CD14-positive monocyte (primary cell): ENCODE measurements at regions of chr14 and their contacts with region 1.

Region 1: DNA sequence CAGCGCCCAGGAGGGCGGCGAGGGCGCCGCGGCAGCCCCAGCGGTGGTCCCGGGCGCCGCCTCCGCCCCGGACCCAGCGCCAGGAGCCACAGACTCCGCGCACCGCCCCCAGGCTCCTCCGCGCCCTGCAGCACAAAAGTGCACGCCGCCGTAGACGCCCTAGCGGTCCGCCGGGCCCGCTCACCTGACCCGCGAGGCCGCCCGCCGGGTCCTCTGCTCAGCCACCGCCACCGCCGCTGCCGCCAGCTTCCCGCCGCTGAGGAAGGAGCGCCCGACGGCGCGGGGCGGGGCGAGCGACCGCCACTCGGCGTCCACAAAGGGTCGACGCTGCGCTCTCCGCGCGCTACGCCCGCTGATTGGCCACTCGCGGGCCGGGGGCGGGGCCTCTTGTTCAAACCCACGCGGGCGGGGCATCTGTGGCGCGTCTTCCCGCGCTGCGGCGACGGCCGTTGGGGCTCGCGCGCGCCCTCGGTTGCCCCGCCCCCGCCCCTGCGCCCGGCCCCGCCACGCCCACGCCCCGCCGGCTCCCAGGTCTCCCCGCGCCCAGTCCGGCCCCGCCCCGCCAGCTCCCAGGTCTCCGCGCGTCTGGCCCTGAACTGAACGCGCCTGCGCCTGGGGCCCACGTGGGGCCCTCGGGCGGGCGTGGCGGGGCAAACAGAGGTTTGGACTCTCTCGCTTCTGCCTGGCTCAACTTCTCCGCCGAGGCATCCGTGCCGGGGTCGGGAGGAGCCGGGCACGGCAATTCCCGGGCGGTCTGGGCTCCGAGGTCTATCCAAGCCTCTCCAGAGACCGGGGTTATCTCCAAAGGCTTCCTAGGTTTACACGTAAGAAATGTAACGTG is at the start of gene CDCA4:
- DNase-seq: peak; percentile 96 to 97 (median 96)
- H3K4me3 ChIP-seq: peak within 1 kb of the TSS; percentile 51 to 81 (median 54)
- H3K4me3 Mint-ChIP-seq: peak within 1 kb of the TSS; percentile 89 to 91
- H3K27ac ChIP-seq: peak within 1 kb of the TSS; percentile 92 to 95
- H3K27ac Mint-ChIP-seq: peak within 1 kb of the TSS; percentile 92 to 99 (median 97)
- H3K4me1 ChIP-seq: peaks cover 51 to 74% of the 10 kb centered on the region in 2 donors
- H3K4me1 Mint-ChIP-seq: peaks cover 78% of the 10 kb centered on the region
- H3K27me3 ChIP-seq: no peaks in the 10 kb centered on the region
- H3K27me3 Mint-ChIP-seq: peaks cover 0 to 7% (median 0%) of the 10 kb centered on the region in 3 donors
- CTCF ChIP-seq: no peak
- polyA plus RNA-seq, gene CDCA4: 8.6 to 12.0 (median 11.6) TPM

Region 2: DNA sequence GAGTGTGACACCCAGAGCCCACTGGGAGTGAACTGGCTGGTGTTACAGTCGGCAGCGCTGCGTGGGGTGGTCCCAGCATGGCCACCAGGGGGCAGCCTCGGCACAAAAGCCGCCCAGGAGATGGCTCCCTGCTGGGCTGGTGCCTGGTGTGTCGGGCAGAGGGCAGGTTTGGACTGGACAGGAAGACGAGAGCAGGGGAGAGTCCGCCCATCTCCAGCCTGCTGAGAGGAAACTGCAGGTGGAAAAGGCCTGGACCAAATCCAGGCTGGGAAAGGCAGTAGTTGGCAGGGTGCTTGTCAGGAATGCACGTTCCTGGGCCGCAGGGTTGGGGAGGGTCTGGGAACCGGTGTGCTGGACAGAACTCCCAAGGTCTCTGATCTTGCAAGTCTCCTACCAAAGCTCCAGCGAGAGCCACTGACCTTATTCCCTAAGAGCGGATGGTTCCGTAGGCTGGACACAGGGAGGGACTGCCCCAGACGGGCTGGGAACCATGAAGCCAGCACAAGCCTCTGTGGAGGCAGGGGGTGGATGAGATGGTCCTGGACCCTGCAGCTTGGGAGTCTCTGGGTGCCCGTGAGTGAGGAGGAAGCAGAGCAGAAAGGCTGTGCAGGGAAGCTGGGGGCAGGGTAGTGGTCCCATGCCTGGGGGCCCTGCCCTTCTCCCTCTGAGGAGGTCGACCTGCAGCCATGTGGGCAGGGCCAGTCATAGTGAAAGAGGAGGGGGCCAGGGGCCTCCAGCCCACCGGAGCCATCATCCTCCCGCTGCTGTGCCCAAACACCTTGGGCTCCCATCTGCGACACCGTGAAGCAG is 44.6 kb before region 1 on chr14:
- intact Hi-C with region 1: loop called in 1 of 2 experiments (anchors 5 kb)
- DNase-seq: peak; percentile 78 to 80 (median 80)
- H3K4me3 ChIP-seq: no peak overlapping the region
- H3K4me3 Mint-ChIP-seq: peak overlapping the region in 1 of 2 donors; percentile 79
- H3K27ac ChIP-seq: no peak overlapping the region
- H3K27ac Mint-ChIP-seq: peak overlapping the region in 2 of 7 donors; percentile 45 to 79
- H3K4me1 ChIP-seq: peaks cover 5 to 24% of the 10 kb centered on the region in 2 donors
- H3K4me1 Mint-ChIP-seq: peaks cover 17% of the 10 kb centered on the region
- H3K27me3 ChIP-seq: peaks cover 10 to 34% of the 10 kb centered on the region in 2 donors
- H3K27me3 Mint-ChIP-seq: peaks cover 38 to 43% (median 42%) of the 10 kb centered on the region in 3 donors
- CTCF ChIP-seq: peak; percentile 90

Region 3: DNA sequence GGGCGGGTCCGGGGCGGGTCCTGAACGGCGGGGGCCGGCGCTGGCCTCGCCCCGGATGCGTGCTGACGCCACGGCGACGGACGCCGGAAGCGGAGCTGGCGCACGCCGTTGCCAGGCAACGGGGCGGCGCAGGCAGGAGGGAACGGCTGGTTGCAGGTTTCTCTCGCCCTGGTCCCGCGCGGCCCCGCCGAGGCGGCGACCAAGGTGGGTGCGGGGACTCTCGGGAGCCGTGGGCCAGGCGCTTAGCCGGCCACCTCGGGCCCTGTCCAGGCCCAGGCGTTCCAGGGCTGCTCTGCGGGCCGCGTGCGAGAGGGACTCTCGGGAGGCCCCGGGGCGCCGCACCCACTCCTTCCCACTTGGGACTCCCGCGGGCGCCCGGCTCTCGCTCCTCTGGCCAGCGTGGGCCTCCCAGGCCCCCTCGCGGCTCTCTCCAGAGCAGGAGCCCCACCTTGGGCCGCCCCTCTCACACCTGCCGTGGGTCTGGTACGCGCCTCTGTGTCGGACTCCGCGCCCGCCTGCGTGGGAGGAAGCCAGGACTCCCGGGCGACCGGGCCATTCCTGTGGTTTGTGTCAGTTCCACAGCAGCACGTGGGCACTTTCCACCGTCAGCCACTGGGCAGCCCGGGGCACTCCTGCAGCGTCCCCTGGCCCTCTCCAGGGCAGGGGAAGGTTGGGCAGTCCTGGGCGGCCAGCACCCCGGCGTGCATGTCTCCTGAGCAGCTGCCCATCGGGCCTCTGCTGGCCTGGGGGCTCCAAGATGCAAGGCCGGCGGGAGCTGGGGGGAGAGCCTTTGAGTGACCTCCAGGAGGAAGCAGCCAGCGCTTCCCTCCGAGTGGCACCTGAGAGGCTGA is 35.1 kb before region 1 on chr14 and contains the start of gene CLBA1:
- intact Hi-C with region 1: loop called in 1 of 2 experiments (anchors 2 kb)
- DNase-seq: peak; percentile 88 to 89 (median 89)
- H3K4me3 ChIP-seq: peak within 1 kb of the TSS; percentile 44 to 77 (median 52)
- H3K4me3 Mint-ChIP-seq: peak within 1 kb of the TSS; percentile 73 to 81
- H3K27ac ChIP-seq: peak within 1 kb of the TSS in 1 of 2 donors; percentile 51
- H3K27ac Mint-ChIP-seq: peak within 1 kb of the TSS; percentile 41 to 91 (median 76)
- H3K4me1 ChIP-seq: peaks cover 17 to 23% of the 10 kb centered on the region in 2 donors
- H3K4me1 Mint-ChIP-seq: peaks cover 13% of the 10 kb centered on the region
- H3K27me3 ChIP-seq: peaks cover 0 to 5% of the 10 kb centered on the region in 2 donors
- H3K27me3 Mint-ChIP-seq: peaks cover 2 to 17% (median 8%) of the 10 kb centered on the region in 3 donors
- CTCF ChIP-seq: no peak
- polyA plus RNA-seq, gene CLBA1: 0.62 to 0.76 (median 0.63) TPM

Region 4: GRCh38 chr14:105045710-105046326 is 24.8 kb after region 1 on chr14:
- intact Hi-C with region 1: loop called in 1 of 2 experiments (anchors 1 kb)
- DNase-seq: peak; percentile 90 to 94 (median 91)
- H3K4me3 ChIP-seq: peak overlapping the region in 1 of 3 experiments; percentile 14
- H3K4me3 Mint-ChIP-seq: peak overlapping the region in 1 of 2 donors; percentile 51
- H3K27ac ChIP-seq: peak overlapping the region; percentile 21 to 38
- H3K27ac Mint-ChIP-seq: peak overlapping the region in 5 of 7 donors; percentile 19 to 77 (median 25)
- H3K4me1 ChIP-seq: peaks cover 32 to 38% of the 10 kb centered on the region in 2 donors
- H3K4me1 Mint-ChIP-seq: peaks cover 24% of the 10 kb centered on the region
- H3K27me3 ChIP-seq: no peaks in the 10 kb centered on the region
- H3K27me3 Mint-ChIP-seq: peaks cover 0 to 6% (median 2%) of the 10 kb centered on the region in 3 donors
- CTCF ChIP-seq: peak; percentile 100

Region 5: DNA sequence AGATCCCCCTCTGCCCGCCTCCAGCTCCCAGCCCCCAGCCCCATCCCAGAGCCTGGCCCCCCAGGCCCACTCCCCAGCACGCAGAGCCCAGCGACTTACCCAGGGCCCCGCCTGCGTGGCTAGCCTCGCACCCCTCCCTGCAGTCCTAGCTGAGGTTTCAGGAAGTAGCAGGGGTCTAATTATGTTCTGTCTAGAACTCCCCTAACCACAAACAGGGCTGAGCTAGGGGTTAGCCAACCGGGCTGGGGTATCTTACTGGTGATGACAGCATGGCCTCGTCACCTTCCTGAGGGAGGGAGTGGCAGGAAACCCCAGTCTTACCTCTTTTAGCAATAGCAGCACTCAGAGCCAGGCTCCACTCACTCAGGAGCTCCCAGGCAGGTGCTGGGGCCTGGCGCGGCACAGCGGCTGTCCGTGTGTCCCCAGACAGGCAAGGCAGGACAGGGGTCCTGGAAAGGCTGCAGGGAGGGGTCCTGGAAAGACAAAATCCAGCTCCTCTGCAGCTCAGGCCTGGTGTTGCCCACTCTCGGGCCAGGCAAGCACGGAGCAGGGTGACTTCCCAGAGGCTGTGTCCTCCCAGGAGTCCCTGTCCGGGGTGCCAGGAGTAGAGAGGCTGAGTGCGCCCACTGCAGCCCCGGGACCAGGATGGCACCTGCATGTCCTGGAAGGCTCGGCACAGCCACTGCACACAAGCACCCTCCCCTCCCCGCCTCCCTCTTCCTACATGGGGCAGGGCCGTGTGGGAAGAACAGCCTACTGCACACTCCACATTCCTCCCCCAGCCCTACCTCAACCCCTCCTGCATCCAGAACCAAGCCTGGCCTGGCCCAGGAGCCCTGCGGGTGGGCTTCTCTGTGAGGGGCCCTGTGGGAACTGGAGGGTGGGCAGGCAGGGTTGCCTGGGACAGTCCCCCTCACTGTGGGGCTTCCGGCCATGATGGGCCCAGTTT is 44.5 kb after region 1 on chr14 and contains the start of gene GPR132:
- intact Hi-C with region 1: loop called (anchors 2 kb)
- DNase-seq: peak; percentile 98 to 100 (median 99)
- H3K4me3 ChIP-seq: peak within 1 kb of the TSS; percentile 72 to 87 (median 83)
- H3K4me3 Mint-ChIP-seq: peak within 1 kb of the TSS; percentile 95 to 96
- H3K27ac ChIP-seq: peak within 1 kb of the TSS; percentile 99 to 100
- H3K27ac Mint-ChIP-seq: peak within 1 kb of the TSS; percentile 98 to 99 (median 99)
- H3K4me1 ChIP-seq: peaks cover 93 to 94% of the 10 kb centered on the region in 2 donors
- H3K4me1 Mint-ChIP-seq: peaks cover 86% of the 10 kb centered on the region
- H3K27me3 ChIP-seq: no peaks in the 10 kb centered on the region
- H3K27me3 Mint-ChIP-seq: peaks cover 0 to 4% (median 3%) of the 10 kb centered on the region in 3 donors
- CTCF ChIP-seq: no peak
- polyA plus RNA-seq, gene GPR132: 6.3 to 19.0 (median 13.0) TPM

Region 6: GRCh38 chr14:105267820-105268548 is 246.9 kb after region 1 on chr14:
- intact Hi-C with region 1: no loop called
- DNase-seq: no peak
- H3K4me3 ChIP-seq: no peak overlapping the region
- H3K4me3 Mint-ChIP-seq: no peak overlapping the region
- H3K27ac ChIP-seq: no peak overlapping the region
- H3K27ac Mint-ChIP-seq: peak overlapping the region in 1 of 7 donors; percentile 55
- H3K4me1 ChIP-seq: no peaks in the 10 kb centered on the region
- H3K4me1 Mint-ChIP-seq: no peaks in the 10 kb centered on the region
- H3K27me3 ChIP-seq: no peaks in the 10 kb centered on the region
- H3K27me3 Mint-ChIP-seq: no peaks in the 10 kb centered on the region
- CTCF ChIP-seq: no peak